Activated B cell treated with CpG ODN at 0.5 μM for 24 hours (primary cell): ENCODE measurements at regions of chr16 and their contacts with region 1.

Region 1: GRCh38 chr16:27203429-27204231 is at the start of gene KDM8:
- DNase-seq: peak; percentile 97
- ATAC-seq: peak; percentile 87
- H3K4me3 Mint-ChIP-seq: peak within 1 kb of the TSS; percentile 99
- H3K27ac Mint-ChIP-seq: peak within 1 kb of the TSS; percentile 100
- H3K4me1 Mint-ChIP-seq: peaks cover 66% of the 10 kb centered on the region
- H3K27me3 Mint-ChIP-seq: no peaks in the 10 kb centered on the region
- CTCF ChIP-seq: no peak
- total RNA-seq, gene KDM8: 13.4 and 17.9 TPM in 2 replicates

Region 2: GRCh38 chr16:27179500-27180072 is 24.0 kb before region 1 on chr16:
- CTCF ChIA-PET with region 1: interaction called, 13 read pairs
- POLR2A ChIA-PET with region 1: interaction called, 9 read pairs
- intact Hi-C with region 1: loop called (anchors 1 kb)
- DNase-seq: peak; percentile 73
- ATAC-seq: peak; percentile 99
- H3K4me3 Mint-ChIP-seq: no peak overlapping the region
- H3K27ac Mint-ChIP-seq: peak overlapping the region; percentile 5
- H3K4me1 Mint-ChIP-seq: peaks cover 28% of the 10 kb centered on the region
- H3K27me3 Mint-ChIP-seq: no peaks in the 10 kb centered on the region
- CTCF ChIP-seq: peak; percentile 49

Region 3: DNA sequence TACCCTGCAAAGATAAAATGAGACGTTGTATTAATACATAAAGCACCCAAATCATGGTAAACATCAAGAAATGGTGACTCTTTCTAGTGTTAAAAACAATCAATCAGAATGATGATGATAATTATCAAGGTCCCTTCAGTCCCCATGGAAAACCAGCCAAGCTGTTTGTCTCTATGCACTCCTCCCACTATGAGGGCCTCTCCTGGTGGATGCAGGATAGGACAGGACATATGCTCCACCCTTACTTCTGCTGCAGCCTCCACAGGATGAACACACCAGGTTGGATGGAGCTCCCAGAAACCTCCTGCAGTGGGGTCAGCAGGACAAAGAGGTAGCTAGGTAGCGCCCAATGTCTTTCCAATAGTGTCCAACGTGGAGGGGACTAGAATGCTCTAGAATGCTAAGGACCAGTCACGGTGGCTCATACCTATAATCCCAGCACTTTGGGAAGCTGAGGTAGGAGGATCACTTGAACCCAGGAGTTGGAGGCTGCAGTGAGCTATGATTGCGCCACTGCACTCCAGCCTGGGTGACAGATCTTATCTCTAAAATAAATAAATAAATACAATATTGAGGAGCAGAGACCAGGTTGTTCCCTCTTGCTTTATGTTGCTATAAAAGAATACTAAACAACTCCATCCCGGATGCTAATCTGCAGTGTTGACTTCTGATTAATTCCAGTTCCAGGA is 10.2 kb before region 1 on chr16:
- CTCF ChIA-PET with region 1: no interaction called
- POLR2A ChIA-PET with region 1: interaction called, 10 read pairs
- intact Hi-C with region 1: no loop called
- DNase-seq: no peak
- ATAC-seq: no peak
- H3K4me3 Mint-ChIP-seq: no peak overlapping the region
- H3K27ac Mint-ChIP-seq: no peak overlapping the region
- H3K4me1 Mint-ChIP-seq: peaks cover 4% of the 10 kb centered on the region
- H3K27me3 Mint-ChIP-seq: no peaks in the 10 kb centered on the region
- CTCF ChIP-seq: no peak

Region 4: GRCh38 chr16:27225536-27226360 is 22.1 kb after region 1 on chr16:
- CTCF ChIA-PET with region 1: interaction called, 5 read pairs
- POLR2A ChIA-PET with region 1: interaction called, 18 read pairs
- intact Hi-C with region 1: loop called (anchors 2 kb)
- DNase-seq: no peak
- ATAC-seq: no peak
- H3K4me3 Mint-ChIP-seq: no peak overlapping the region
- H3K27ac Mint-ChIP-seq: no peak overlapping the region
- H3K4me1 Mint-ChIP-seq: peaks cover 46% of the 10 kb centered on the region
- H3K27me3 Mint-ChIP-seq: no peaks in the 10 kb centered on the region
- CTCF ChIP-seq: no peak

Region 5: DNA sequence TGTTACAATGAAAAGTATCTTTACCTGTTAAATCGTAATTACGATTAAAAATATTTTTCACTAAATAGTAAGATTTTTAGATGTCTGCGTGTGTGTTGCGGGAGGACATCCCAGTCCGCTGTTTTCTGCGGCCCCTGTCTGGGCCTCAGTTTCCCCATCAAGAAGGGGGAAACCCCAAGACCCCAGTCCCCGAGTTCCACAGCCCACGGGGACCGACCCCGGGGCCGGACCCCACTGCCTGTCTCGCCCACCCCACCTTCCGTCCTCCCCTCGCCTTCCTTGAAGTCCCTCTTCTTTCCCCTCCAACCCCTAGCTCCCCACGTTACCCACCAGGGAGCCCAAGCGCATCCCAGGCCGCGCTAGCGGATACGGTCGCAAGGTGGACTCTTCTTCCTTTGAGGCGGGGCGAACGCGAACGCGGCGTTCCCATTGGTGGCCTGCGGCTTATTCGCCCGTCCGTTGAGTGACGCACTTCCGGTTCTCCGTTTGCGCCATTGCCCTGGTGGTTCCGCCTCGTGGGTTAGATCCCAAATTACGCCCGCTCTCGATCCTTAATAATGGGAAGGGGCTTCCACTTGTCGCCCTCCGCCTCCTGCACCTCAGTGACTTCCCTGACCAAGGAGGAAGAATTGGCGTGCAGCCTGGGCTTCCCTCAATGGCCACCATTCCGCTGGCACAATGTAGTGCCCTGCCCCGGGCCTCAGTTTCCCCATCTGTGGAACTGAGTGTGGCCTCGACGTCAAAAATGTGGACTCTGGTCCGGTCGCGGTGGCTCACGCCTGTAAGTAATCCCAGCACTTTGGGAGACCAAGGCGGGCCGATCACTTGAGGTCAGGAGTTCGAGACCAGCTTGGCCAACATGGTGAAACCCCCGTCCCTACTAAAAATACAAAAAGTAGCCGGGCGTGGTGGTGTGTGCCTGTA is 65.0 kb after region 1 on chr16 and contains the start of gene NSMCE1:
- CTCF ChIA-PET with region 1: no interaction called
- POLR2A ChIA-PET with region 1: interaction called, 3 read pairs
- intact Hi-C with region 1: loop called (anchors 2 kb)
- DNase-seq: peak; percentile 92
- ATAC-seq: peak; percentile 97
- H3K4me3 Mint-ChIP-seq: peak within 1 kb of the TSS; percentile 96
- H3K27ac Mint-ChIP-seq: peak within 1 kb of the TSS; percentile 99
- H3K4me1 Mint-ChIP-seq: peaks cover 73% of the 10 kb centered on the region
- H3K27me3 Mint-ChIP-seq: no peaks in the 10 kb centered on the region
- CTCF ChIP-seq: no peak
- total RNA-seq, gene NSMCE1: 61.0 and 68.3 TPM in 2 replicates

Region 6: GRCh38 chr16:27304881-27305745 is 101.5 kb after region 1 on chr16:
- CTCF ChIA-PET with region 1: no interaction called
- POLR2A ChIA-PET with region 1: no interaction called
- intact Hi-C with region 1: no loop called
- DNase-seq: no peak
- ATAC-seq: no peak
- H3K4me3 Mint-ChIP-seq: no peak overlapping the region
- H3K27ac Mint-ChIP-seq: peak overlapping the region; percentile 20
- H3K4me1 Mint-ChIP-seq: peaks cover 59% of the 10 kb centered on the region
- H3K27me3 Mint-ChIP-seq: no peaks in the 10 kb centered on the region
- CTCF ChIP-seq: no peak

Region 7: GRCh38 chr16:27408012-27408601 is 204.5 kb after region 1 on chr16:
- CTCF ChIA-PET with region 1: interaction called, 4 read pairs
- POLR2A ChIA-PET with region 1: interaction called, 21 read pairs
- intact Hi-C with region 1: no loop called
- DNase-seq: no peak
- ATAC-seq: peak; percentile 35
- H3K4me3 Mint-ChIP-seq: peak overlapping the region; percentile 71
- H3K27ac Mint-ChIP-seq: peak overlapping the region; percentile 96
- H3K4me1 Mint-ChIP-seq: peaks cover 90% of the 10 kb centered on the region
- H3K27me3 Mint-ChIP-seq: no peaks in the 10 kb centered on the region
- CTCF ChIP-seq: no peak

Region 8: GRCh38 chr16:27549859-27550581 is 346.4 kb after region 1 on chr16 and contains the starts of genes GTF3C1 and KATNIP:
- CTCF ChIA-PET with region 1: no interaction called
- POLR2A ChIA-PET with region 1: interaction called, 8 read pairs
- intact Hi-C with region 1: loop called (anchors 1 kb)
- DNase-seq: peak; percentile 100
- ATAC-seq: peak; percentile 99
- H3K4me3 Mint-ChIP-seq: peak within 1 kb of the TSS; percentile 95
- H3K27ac Mint-ChIP-seq: peak within 1 kb of the TSS; percentile 94
- H3K4me1 Mint-ChIP-seq: peaks cover 34% of the 10 kb centered on the region
- H3K27me3 Mint-ChIP-seq: no peaks in the 10 kb centered on the region
- CTCF ChIP-seq: no peak
- total RNA-seq, gene GTF3C1: 47.7 and 52.3 TPM in 2 replicates
- total RNA-seq, gene KATNIP: 32.3 and 40.4 TPM in 2 replicates